Gastrocnemius medialis (tissue), 4 donors: ENCODE measurements at regions of chrX and their contacts with region 1.

Region 1: GRCh38 chrX:152958524-152959465 is 35.1 kb downstream of the PNMA5 start:
- DNase-seq: peak; percentile 56 to 84
- ATAC-seq: peak; percentile 95 to 97
- H3K4me3 ChIP-seq: peak overlapping the region; percentile 39 to 52 (median 46)
- H3K27ac ChIP-seq: peak overlapping the region; percentile 65 to 81 (median 68)
- H3K4me1 ChIP-seq: peaks cover 0 to 2% of the 10 kb centered on the region in 2 donors
- H3K27me3 ChIP-seq: no peaks in the 10 kb centered on the region
- CTCF ChIP-seq: peak; percentile 83 to 93 (median 89)
- POLR2A ChIP-seq: no peak

Region 2: DNA sequence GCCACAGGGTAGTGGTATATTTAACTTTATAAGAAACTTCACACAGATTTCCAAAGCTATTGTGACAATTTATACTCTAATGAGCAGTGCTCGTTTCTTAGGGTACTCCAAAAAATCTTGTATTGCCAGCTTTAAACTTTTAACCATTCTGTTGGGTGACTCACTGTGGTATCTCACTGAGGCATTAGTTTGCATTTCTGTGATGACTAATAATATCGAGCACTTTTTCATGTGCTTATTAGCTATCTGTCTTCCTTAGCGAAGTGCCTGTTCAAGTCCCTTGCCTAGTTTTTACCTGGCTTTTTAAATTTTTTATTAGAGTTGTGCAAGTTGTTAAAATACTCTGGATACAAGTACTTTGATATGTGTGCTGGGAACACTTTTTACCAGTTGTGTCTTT is 102.9 kb after region 1 on chrX:
- in situ Hi-C with region 1: no loop called
- intact Hi-C with region 1: no loop called
- DNase-seq: no peak
- ATAC-seq: no peak
- H3K4me3 ChIP-seq: no peak overlapping the region
- H3K27ac ChIP-seq: no peak overlapping the region
- H3K4me1 ChIP-seq: no peaks in the 10 kb centered on the region
- H3K27me3 ChIP-seq: peaks cover 0 to 13% (median 8%) of the 10 kb centered on the region in 3 donors
- CTCF ChIP-seq: no peak
- POLR2A ChIP-seq: no peak

Region 3: GRCh38 chrX:153333768-153334645 is 375.2 kb after region 1 on chrX and contains the start of gene ZNF275:
- in situ Hi-C with region 1: loop called in 1 of 4 experiments (anchors 25 kb)
- intact Hi-C with region 1: no loop called
- DNase-seq: peak; percentile 45 to 69
- ATAC-seq: peak; percentile 94
- H3K4me3 ChIP-seq: peak within 1 kb of the TSS; percentile 60 to 74 (median 66)
- H3K27ac ChIP-seq: peak within 1 kb of the TSS; percentile 62 to 71 (median 64)
- H3K4me1 ChIP-seq: peaks cover 0 to 4% of the 10 kb centered on the region in 2 donors
- H3K27me3 ChIP-seq: no peaks in the 10 kb centered on the region
- CTCF ChIP-seq: no peak
- POLR2A ChIP-seq: peak; percentile 46 to 51
- total RNA-seq, gene ZNF275: 4.6 to 7.6 (median 5.0) TPM

Region 4: GRCh38 chrX:153507484-153508178 is 548.8 kb after region 1 on chrX:
- in situ Hi-C with region 1: loop called in 2 of 4 experiments (anchors 25 kb)
- intact Hi-C with region 1: loop called (anchors 1 kb)
- DNase-seq: peak; percentile 40 to 68
- ATAC-seq: peak; percentile 79 to 89
- H3K4me3 ChIP-seq: no peak overlapping the region
- H3K27ac ChIP-seq: no peak overlapping the region
- H3K4me1 ChIP-seq: no peaks in the 10 kb centered on the region
- H3K27me3 ChIP-seq: no peaks in the 10 kb centered on the region
- CTCF ChIP-seq: peak; percentile 51 to 89 (median 82)
- POLR2A ChIP-seq: no peak

Region 5: GRCh38 chrX:153667956-153668396 is 709.2 kb after region 1 on chrX:
- in situ Hi-C with region 1: loop called in 2 of 4 experiments (anchors 10 to 25 kb)
- intact Hi-C with region 1: loop called (anchors 10 kb)
- DNase-seq: peak; percentile 41 to 74
- ATAC-seq: peak; percentile 77 to 90
- H3K4me3 ChIP-seq: no peak overlapping the region
- H3K27ac ChIP-seq: no peak overlapping the region
- H3K4me1 ChIP-seq: peaks cover 0 to 5% of the 10 kb centered on the region in 2 donors
- H3K27me3 ChIP-seq: peaks cover 0 to 7% (median 5%) of the 10 kb centered on the region in 3 donors
- CTCF ChIP-seq: peak; percentile 47 to 79 (median 70)
- POLR2A ChIP-seq: no peak

Region 6: DNA sequence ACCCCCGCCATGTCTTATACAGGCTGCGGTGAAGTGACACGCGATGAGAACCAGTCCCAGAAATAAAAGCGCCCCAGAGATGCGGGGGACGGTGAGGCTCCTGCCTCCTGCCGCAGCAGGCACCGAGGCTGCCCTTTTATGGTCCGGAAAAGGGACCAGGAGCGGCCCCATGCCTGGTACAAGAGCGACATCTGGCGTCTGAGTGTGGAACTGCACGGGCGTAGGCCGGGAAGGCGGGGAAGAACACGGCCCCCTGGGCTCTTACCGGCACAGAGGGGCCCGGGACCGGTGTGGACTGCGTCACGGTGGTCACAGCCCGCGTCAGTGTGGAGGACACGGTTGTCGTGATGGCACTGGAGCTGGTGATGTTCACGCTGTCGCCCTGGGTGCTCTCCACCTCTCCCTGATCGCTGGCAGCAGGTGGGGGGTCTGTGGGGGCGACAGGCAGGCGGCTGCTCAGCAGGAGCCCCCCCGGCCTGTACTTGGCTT is 994.6 kb after region 1 on chrX:
- in situ Hi-C with region 1: loop called in 1 of 4 experiments (anchors 25 kb)
- intact Hi-C with region 1: loop called (anchors 10 kb)
- DNase-seq: peak; percentile 32 to 60
- ATAC-seq: peak; percentile 67 to 82
- H3K4me3 ChIP-seq: no peak overlapping the region
- H3K27ac ChIP-seq: peak overlapping the region in 1 of 4 donors; percentile 59
- H3K4me1 ChIP-seq: no peaks in the 10 kb centered on the region
- H3K27me3 ChIP-seq: no peaks in the 10 kb centered on the region
- CTCF ChIP-seq: peak; percentile 81 to 98 (median 97)
- POLR2A ChIP-seq: no peak